GM12878 (cell line): ENCODE measurements at regions of chrX and their contacts with region 1.

Region 1: GRCh38 chrX:18203631-18204030 is 17.1 kb downstream of the BEND2 start:
- DNase-seq: no peak
- ATAC-seq: no peak
- H3K4me3 ChIP-seq: no peak overlapping the region
- H3K27ac ChIP-seq: no peak overlapping the region
- H3K4me1 ChIP-seq: no peaks in the 10 kb centered on the region
- H3K27me3 ChIP-seq: no peaks in the 10 kb centered on the region
- CTCF ChIP-seq: no peak
- EP300 ChIP-seq: no peak
- POLR2A ChIP-seq: no peak
- RAD21 ChIP-seq: no peak

Region 2: GRCh38 chrX:17944833-17945497 is 258.7 kb before region 1 on chrX:
- CTCF ChIA-PET with region 1: interaction called, 4 read pairs
- POLR2A ChIA-PET with region 1: no interaction called
- RAD21 ChIA-PET with region 1: no interaction called
- SMC1A ChIA-PET with region 1: no interaction called
- in situ Hi-C with region 1: no loop called
- intact Hi-C with region 1: loop called (anchors 10 kb)
- DNase-seq: no peak
- ATAC-seq: peak; percentile 69
- H3K4me3 ChIP-seq: no peak overlapping the region
- H3K27ac ChIP-seq: no peak overlapping the region
- H3K4me1 ChIP-seq: no peaks in the 10 kb centered on the region
- H3K27me3 ChIP-seq: no peaks in the 10 kb centered on the region; a peak in 1 of 4 replicates
- CTCF ChIP-seq: peak; percentile 56 to 71 (median 67)
- EP300 ChIP-seq: no peak
- POLR2A ChIP-seq: no peak
- RAD21 ChIP-seq: peak; percentile 60

Region 3: DNA sequence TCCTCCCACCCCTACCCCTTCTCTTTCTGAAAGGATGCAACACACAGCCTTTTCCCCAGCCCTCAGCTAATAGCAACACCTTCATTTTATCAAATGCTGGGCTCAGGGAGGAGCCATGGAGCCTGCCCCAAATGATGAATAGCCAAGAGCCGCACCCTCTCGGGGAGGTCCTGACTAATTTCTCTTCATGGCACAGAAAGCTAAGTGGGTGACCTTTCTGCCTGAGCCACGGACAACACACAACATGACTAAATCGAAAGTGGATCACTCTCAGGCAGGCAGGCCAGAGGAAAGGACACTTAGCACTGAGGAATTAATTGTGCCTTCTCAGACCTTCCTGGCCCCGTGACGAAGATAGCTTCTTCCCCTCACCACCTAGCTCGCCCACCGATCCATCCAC is 177.5 kb before region 1 on chrX:
- CTCF ChIA-PET with region 1: no interaction called
- POLR2A ChIA-PET with region 1: no interaction called
- RAD21 ChIA-PET with region 1: no interaction called
- SMC1A ChIA-PET with region 1: no interaction called
- in situ Hi-C with region 1: no loop called
- intact Hi-C with region 1: no loop called
- DNase-seq: no peak
- ATAC-seq: no peak
- H3K4me3 ChIP-seq: no peak overlapping the region
- H3K27ac ChIP-seq: no peak overlapping the region
- H3K4me1 ChIP-seq: no peaks in the 10 kb centered on the region
- H3K27me3 ChIP-seq: no peaks in the 10 kb centered on the region; a peak in 1 of 4 replicates
- CTCF ChIP-seq: no peak
- EP300 ChIP-seq: no peak
- POLR2A ChIP-seq: no peak
- RAD21 ChIP-seq: no peak

Region 4: GRCh38 chrX:18461431-18461830 is 257.8 kb after region 1 on chrX:
- CTCF ChIA-PET with region 1: no interaction called
- POLR2A ChIA-PET with region 1: no interaction called
- RAD21 ChIA-PET with region 1: no interaction called
- SMC1A ChIA-PET with region 1: no interaction called
- in situ Hi-C with region 1: no loop called
- intact Hi-C with region 1: no loop called
- DNase-seq: no peak
- ATAC-seq: no peak
- H3K4me3 ChIP-seq: no peak overlapping the region
- H3K27ac ChIP-seq: no peak overlapping the region
- H3K4me1 ChIP-seq: no peaks in the 10 kb centered on the region
- H3K27me3 ChIP-seq: no peaks in the 10 kb centered on the region
- CTCF ChIP-seq: no peak
- EP300 ChIP-seq: no peak
- POLR2A ChIP-seq: no peak
- RAD21 ChIP-seq: no peak